Activated CD8-positive, alpha-beta T cell treated with anti-CD3 and anti-CD28 coated beads for 36 hours (primary cell): ENCODE measurements at regions of chr9 and their contacts with region 1.

Region 1: DNA sequence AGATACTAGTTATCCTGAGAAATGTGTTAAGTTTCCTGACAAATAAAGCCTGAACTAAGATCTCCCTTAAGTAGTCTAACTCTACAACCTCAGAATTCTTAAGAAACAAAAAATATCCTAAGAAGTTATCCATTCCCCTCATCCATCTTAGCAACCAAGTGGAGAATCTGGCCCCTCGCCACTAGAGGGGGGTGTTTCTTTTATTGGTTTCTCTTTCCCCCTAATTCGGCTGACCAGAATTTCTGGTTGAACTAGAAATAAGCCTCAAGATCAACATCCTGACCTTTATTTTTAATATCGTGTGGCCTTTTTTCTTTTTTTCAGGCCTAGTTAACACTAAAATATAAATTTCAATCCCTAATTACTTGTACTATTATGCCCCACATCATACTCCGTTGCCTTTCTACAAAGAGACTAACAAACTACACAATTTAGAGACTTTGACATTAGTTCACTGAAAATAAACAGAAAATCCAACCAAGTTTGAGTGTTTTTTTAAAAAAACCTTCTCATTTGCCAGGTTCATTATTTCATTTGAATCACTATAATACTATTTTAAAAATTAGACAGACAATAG is 14.3 kb upstream of the NR4A3 start:
- DNase-seq: peak; percentile 83
- ATAC-seq: peak; percentile 50
- H3K4me3 Mint-ChIP-seq: no peak overlapping the region
- H3K27ac Mint-ChIP-seq: no peak overlapping the region
- H3K4me1 Mint-ChIP-seq: peaks cover 42% of the 10 kb centered on the region
- H3K27me3 Mint-ChIP-seq: no peaks in the 10 kb centered on the region
- CTCF ChIP-seq: peak; percentile 91

Region 2: DNA sequence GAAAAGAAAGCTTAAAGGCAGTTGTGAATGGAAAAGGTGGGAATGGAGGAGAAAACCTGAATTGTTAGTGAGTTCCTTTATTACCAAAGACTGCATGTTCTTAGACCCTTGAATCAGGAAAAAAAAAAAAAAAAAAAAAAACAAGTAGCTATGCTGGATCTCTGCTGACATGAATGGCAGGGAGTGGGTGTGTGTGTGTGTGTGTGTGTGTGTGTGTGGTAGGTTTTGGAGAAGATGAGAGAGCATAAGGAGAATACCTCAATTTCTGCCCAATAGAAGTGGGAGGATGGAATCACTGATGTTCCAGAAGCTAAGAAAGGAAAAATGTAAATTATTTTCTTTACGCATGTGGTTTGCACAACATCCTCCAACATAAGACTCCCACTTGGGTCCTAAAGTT is 11.1 kb before region 1 on chr9:
- CTCF ChIA-PET with region 1: no interaction called
- POLR2A ChIA-PET with region 1: no interaction called
- intact Hi-C with region 1: no loop called
- DNase-seq: peak; percentile 7
- ATAC-seq: no peak
- H3K4me3 Mint-ChIP-seq: no peak overlapping the region
- H3K27ac Mint-ChIP-seq: no peak overlapping the region
- H3K4me1 Mint-ChIP-seq: no peaks in the 10 kb centered on the region
- H3K27me3 Mint-ChIP-seq: peaks cover 7% of the 10 kb centered on the region
- CTCF ChIP-seq: no peak

Region 3: GRCh38 chr9:99906403-99907207 is 99.2 kb after region 1 on chr9 and contains the start of gene STX17:
- CTCF ChIA-PET with region 1: no interaction called
- POLR2A ChIA-PET with region 1: interaction called, 3 read pairs
- intact Hi-C with region 1: loop called (anchors 5 kb)
- DNase-seq: peak; percentile 83
- ATAC-seq: peak; percentile 92
- H3K4me3 Mint-ChIP-seq: peak within 1 kb of the TSS; percentile 97
- H3K27ac Mint-ChIP-seq: peak within 1 kb of the TSS; percentile 97
- H3K4me1 Mint-ChIP-seq: peaks cover 25% of the 10 kb centered on the region
- H3K27me3 Mint-ChIP-seq: no peaks in the 10 kb centered on the region
- CTCF ChIP-seq: no peak
- total RNA-seq, gene STX17: 33.3 to 41.9 TPM

Region 4: DNA sequence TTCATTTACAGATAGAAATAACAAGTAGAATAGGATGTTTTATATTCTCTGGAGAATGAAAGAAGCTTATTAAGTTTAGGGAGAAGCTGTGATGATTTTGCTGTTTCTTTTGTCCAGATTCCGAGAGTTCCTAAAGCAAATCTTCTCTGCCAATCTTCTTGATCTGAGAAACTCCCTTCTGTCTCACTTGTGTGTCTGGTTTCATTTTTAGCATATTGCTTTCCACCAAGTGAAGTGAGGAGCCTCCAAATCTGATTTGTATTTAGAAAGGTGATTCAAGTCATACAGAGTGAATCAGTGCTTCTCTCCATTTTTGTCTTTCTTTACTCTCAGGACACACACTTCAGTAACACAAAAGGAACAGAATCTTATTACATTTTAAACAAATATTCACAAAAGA is 147.5 kb after region 1 on chr9:
- CTCF ChIA-PET with region 1: no interaction called
- POLR2A ChIA-PET with region 1: no interaction called
- intact Hi-C with region 1: no loop called
- DNase-seq: no peak
- ATAC-seq: peak; percentile 78
- H3K4me3 Mint-ChIP-seq: no peak overlapping the region
- H3K27ac Mint-ChIP-seq: peak overlapping the region; percentile 22
- H3K4me1 Mint-ChIP-seq: peaks cover 25% of the 10 kb centered on the region
- H3K27me3 Mint-ChIP-seq: no peaks in the 10 kb centered on the region
- CTCF ChIP-seq: no peak

Region 5: GRCh38 chr9:99980598-99980997 is 173.2 kb after region 1 on chr9:
- CTCF ChIA-PET with region 1: no interaction called
- POLR2A ChIA-PET with region 1: no interaction called
- intact Hi-C with region 1: no loop called
- DNase-seq: no peak
- ATAC-seq: no peak
- H3K4me3 Mint-ChIP-seq: no peak overlapping the region
- H3K27ac Mint-ChIP-seq: peak overlapping the region; percentile 61
- H3K4me1 Mint-ChIP-seq: no peaks in the 10 kb centered on the region
- H3K27me3 Mint-ChIP-seq: no peaks in the 10 kb centered on the region
- CTCF ChIP-seq: no peak